Calu3 (cell line): ENCODE measurements at regions of chr4 and their contacts with region 1.

Region 1: GRCh38 chr4:99462875-99463464 is 27.8 kb upstream of the ADH7 start:
- DNase-seq: peak; percentile 64
- H3K4me3 Mint-ChIP-seq: no peak overlapping the region
- H3K27ac Mint-ChIP-seq: no peak overlapping the region
- H3K4me1 Mint-ChIP-seq: peaks cover 15% of the 10 kb centered on the region
- H3K27me3 Mint-ChIP-seq: no peaks in the 10 kb centered on the region
- CTCF ChIP-seq: peak; percentile 37

Region 2: GRCh38 chr4:99117876-99118693 is 344.9 kb before region 1 on chr4:
- CTCF ChIA-PET with region 1: no interaction called
- intact Hi-C with region 1: loop called (anchors 1 kb)
- DNase-seq: no peak
- H3K4me3 Mint-ChIP-seq: no peak overlapping the region
- H3K27ac Mint-ChIP-seq: no peak overlapping the region
- H3K4me1 Mint-ChIP-seq: no peaks in the 10 kb centered on the region
- H3K27me3 Mint-ChIP-seq: no peaks in the 10 kb centered on the region
- CTCF ChIP-seq: no peak

Region 3: GRCh38 chr4:99201690-99202089 is 261.3 kb before region 1 on chr4:
- CTCF ChIA-PET with region 1: interaction called, 7 read pairs
- intact Hi-C with region 1: loop called (anchors 2 kb)
- DNase-seq: no peak
- H3K4me3 Mint-ChIP-seq: no peak overlapping the region
- H3K27ac Mint-ChIP-seq: no peak overlapping the region
- H3K4me1 Mint-ChIP-seq: peaks cover 21% of the 10 kb centered on the region
- H3K27me3 Mint-ChIP-seq: no peaks in the 10 kb centered on the region
- CTCF ChIP-seq: no peak

Region 4: DNA sequence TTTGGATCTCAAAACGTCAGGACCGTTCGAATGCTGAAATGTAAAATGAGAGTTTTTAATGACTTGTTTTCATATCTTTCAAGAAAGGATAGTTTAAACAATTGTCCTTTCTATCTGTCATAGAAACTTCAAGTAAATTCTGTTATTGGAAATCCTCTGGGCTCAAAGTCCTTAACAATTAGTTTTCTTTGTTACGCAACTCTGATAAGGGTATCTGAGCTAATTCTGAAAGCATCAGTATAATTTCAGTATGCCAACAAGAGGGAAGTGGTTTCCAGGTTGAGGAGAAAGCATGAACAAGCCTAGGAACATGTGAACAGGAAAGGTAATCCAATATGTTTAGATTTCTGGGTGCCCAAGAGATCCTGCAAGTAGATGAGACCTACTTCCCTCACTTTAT is 49.8 kb before region 1 on chr4:
- CTCF ChIA-PET with region 1: interaction called, 3 read pairs
- intact Hi-C with region 1: loop called (anchors 2 kb)
- DNase-seq: no peak
- H3K4me3 Mint-ChIP-seq: no peak overlapping the region
- H3K27ac Mint-ChIP-seq: peak overlapping the region; percentile 58
- H3K4me1 Mint-ChIP-seq: peaks cover 19% of the 10 kb centered on the region
- H3K27me3 Mint-ChIP-seq: no peaks in the 10 kb centered on the region
- CTCF ChIP-seq: no peak